A549 (cell line): ENCODE measurements at regions of chr7 and their contacts with region 1.

Region 1: DNA sequence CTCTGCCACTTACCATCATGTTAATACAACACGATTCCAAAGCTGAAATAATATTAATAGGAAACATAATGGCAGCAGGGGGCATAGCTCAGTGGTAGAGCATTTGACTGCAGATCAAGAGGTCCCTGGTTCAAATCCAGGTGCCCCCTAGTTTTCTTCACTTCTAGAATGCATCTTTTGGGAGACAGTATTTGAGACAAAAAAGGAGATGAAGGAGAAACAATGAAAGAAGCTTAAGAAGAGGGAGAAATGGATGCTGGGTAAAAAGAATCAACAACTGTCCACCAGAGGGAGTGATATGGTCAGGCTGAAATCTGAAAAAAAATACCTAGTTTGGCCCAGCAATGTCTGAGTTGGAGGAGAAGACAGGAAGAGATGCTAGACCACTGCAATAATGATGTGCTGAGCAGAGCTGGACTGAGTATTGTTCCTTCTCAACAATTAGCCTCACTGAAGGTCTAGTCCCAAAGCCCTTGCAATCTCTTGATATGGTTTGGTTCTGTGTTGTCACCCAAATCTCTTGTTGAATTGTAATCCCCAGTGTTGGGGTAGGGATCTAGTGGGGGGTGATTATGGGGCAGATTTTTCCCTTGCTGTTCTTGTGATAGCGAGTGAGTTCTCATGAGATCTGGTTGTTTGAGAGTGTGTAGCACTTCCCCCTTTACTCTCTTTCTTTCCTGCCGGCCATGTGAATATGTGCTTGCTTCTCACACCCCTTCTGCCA is 48.3 kb downstream of the ZNF783 start:
- DNase-seq: peak; percentile 87 to 88
- ATAC-seq: peak; percentile 95
- H3K4me3 ChIP-seq: no peak overlapping the region
- H3K27ac ChIP-seq: no peak overlapping the region
- H3K4me1 ChIP-seq: no peaks in the 10 kb centered on the region
- CTCF ChIP-seq: peak; percentile 55
- EP300 ChIP-seq: no peak
- POLR2A ChIP-seq: no peak
- RAD21 ChIP-seq: peak; percentile 51 to 66

Region 2: GRCh38 chr7:149321978-149322541 is 11.8 kb after region 1 on chr7:
- CTCF ChIA-PET with region 1: interaction called, 25 read pairs
- POLR2A ChIA-PET with region 1: no interaction called
- DNase-seq: no peak
- ATAC-seq: no peak
- H3K4me3 ChIP-seq: no peak overlapping the region
- H3K27ac ChIP-seq: no peak overlapping the region
- H3K4me1 ChIP-seq: no peaks in the 10 kb centered on the region
- CTCF ChIP-seq: no peak
- EP300 ChIP-seq: no peak
- POLR2A ChIP-seq: no peak
- RAD21 ChIP-seq: no peak

Region 3: DNA sequence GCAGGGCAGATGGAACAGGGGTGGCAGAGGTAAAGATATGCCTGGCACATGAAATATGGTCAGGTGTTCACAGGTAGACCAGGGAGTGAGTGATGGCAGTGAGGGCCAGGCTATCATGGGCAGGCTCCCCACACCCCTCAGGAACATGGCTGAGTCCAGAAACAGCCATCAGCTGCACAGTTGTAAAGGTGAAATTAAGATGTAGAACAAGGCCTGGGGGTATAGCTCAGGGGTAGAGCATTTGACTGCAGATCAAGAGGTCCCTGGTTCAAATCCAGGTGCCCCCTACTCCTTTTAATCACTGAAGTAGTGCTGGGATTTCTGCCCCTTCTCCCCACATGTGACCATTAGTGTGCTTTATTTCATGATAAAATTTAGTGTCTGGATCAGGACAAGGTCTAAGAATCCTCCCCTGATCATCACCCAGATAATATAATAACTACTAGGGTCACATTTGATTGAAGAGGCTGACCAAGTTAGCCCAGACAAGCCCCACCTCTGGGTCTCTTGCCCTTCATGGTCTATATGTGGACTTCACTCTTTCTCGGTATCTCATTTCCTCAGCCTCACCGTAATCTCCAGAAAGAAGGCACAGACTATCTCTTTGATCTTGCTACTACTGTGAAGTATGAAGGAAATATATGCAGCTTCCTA is 20.8 kb after region 1 on chr7:
- CTCF ChIA-PET with region 1: interaction called, 11 read pairs
- POLR2A ChIA-PET with region 1: no interaction called
- DNase-seq: peak in 1 of 2 experiments; percentile 19
- ATAC-seq: peak; percentile 54 to 86
- H3K4me3 ChIP-seq: no peak overlapping the region
- H3K27ac ChIP-seq: no peak overlapping the region
- H3K4me1 ChIP-seq: no peaks in the 10 kb centered on the region
- CTCF ChIP-seq: no peak
- EP300 ChIP-seq: no peak
- POLR2A ChIP-seq: no peak
- RAD21 ChIP-seq: no peak

Region 4: GRCh38 chr7:149422129-149422913 is 112.0 kb after region 1 on chr7:
- CTCF ChIA-PET with region 1: interaction called, 19 read pairs
- POLR2A ChIA-PET with region 1: interaction called, 3 read pairs
- DNase-seq: peak; percentile 85 to 86
- ATAC-seq: peak; percentile 95 to 97
- H3K4me3 ChIP-seq: peak overlapping the region; percentile 49
- H3K27ac ChIP-seq: peak overlapping the region; percentile 78 to 93
- H3K4me1 ChIP-seq: no peaks in the 10 kb centered on the region
- CTCF ChIP-seq: peak; percentile 100
- EP300 ChIP-seq: no peak
- POLR2A ChIP-seq: peak; percentile 48
- RAD21 ChIP-seq: peak; percentile 37 to 72